Spleen (tissue), 13 donors: ENCODE measurements at regions of chr3 and their contacts with region 1.

Region 1: GRCh38 chr3:177279118-177279815 is 82.0 kb upstream of the TBL1XR1 start:
- DNase-seq: no peak
- H3K4me3 ChIP-seq: no peak overlapping the region
- H3K27ac ChIP-seq: no peak overlapping the region
- H3K4me1 ChIP-seq: peaks cover 6 to 35% (median 24%) of the 10 kb centered on the region in 6 donors
- H3K27me3 ChIP-seq: no peaks in the 10 kb centered on the region
- CTCF ChIP-seq: no peak
- POLR2A ChIP-seq: no peak

Region 2: GRCh38 chr3:177201706-177202397 is 77.4 kb before region 1 on chr3:
- intact Hi-C with region 1: no loop called
- DNase-seq: no peak
- H3K4me3 ChIP-seq: peak overlapping the region in 1 of 8 donors; percentile 41
- H3K27ac ChIP-seq: peak overlapping the region in 7 of 8 donors; percentile 35 to 99 (median 56)
- H3K4me1 ChIP-seq: peaks cover 10 to 51% (median 30%) of the 10 kb centered on the region in 6 donors
- H3K27me3 ChIP-seq: no peaks in the 10 kb centered on the region
- CTCF ChIP-seq: no peak
- POLR2A ChIP-seq: no peak

Region 3: GRCh38 chr3:177220136-177220974 is 58.9 kb before region 1 on chr3:
- intact Hi-C with region 1: loop called (anchors 10 kb)
- DNase-seq: no peak
- H3K4me3 ChIP-seq: no peak overlapping the region
- H3K27ac ChIP-seq: peak overlapping the region in 3 of 8 donors; percentile 2 to 43 (median 34)
- H3K4me1 ChIP-seq: peaks cover 0 to 25% (median 7%) of the 10 kb centered on the region in 6 donors
- H3K27me3 ChIP-seq: no peaks in the 10 kb centered on the region
- CTCF ChIP-seq: no peak
- POLR2A ChIP-seq: no peak